BJ (cell line): ENCODE measurements at regions of chr3 and their contacts with region 1.

Region 1: GRCh38 chr3:65685621-65686235 is 353.0 kb downstream of the MAGI1 start:
- DNase-seq: no peak
- H3K4me3 ChIP-seq: no peak overlapping the region
- H3K27me3 ChIP-seq: no peaks in the 10 kb centered on the region
- CTCF ChIP-seq: no peak

Region 2: DNA sequence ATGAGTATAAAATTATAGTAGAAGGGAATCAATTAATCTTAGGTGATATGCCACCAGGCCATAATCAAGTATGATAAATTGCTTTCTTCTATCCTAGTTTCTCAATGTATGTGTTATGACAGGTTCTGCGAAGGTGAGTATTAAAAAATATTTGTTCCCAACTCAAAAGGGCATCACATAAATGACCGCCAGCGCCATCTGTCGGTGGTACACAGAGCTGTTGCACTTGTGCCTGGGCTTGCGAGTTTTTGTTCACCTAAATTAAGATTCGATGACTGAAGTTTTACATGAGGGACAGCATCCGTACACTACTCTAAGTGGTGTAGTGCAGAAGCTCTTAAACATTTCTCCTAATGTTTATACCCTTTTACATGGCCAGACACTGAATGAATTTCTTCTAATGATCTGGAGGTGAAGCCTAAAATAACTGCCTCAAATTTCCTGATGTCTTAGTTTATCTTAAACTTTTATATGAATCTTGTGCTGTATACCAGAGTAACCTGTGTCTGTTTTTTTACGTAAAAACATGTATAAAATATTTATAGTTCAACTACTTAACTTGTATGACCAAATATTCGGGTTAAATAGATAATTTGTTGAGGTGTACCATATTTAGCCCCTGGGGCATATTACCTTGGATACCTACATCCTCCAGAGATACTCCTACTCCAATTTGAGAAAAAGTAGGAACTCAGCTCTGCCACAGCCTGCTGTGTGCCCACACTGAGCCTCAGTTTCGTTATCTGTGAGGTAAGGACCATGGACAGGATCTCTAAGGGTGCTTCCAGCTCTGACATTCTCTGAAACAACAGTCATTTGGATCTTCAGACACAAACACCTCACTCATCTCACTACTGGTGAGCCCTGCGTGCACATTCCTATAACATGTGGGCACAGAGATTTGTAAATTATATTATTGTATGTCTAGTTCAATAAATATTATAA is 12.6 kb before region 1 on chr3:
- CTCF ChIA-PET with region 1: interaction called, 14 read pairs
- POLR2A ChIA-PET with region 1: no interaction called
- DNase-seq: no peak
- H3K4me3 ChIP-seq: no peak overlapping the region
- H3K27me3 ChIP-seq: no peaks in the 10 kb centered on the region
- CTCF ChIP-seq: peak; percentile 80